Posterior vena cava (tissue), 2 donors: ENCODE measurements at regions of chr3 and their contacts with region 1.

Region 1: DNA sequence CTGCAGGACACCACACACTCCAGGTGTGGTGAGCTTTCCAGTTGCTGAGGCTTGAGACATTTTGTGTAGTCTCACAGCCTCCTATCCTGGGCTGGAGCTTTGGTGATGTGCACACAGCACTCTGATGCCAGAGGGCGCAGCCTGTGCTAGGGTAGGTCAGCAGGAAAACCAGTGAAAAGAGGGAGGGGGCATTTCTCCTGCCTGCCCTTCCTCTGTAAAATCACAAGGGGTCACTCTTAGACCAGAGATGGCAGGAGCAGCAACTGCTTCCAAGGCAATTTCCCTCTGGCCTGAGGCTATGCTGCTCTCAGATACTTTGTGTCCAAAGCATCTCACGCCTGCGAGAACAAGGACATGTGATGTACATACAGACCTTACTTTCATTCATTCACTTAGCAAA is 16.5 kb upstream of the MUSTN1 start:
- DNase-seq: no peak

Region 2: DNA sequence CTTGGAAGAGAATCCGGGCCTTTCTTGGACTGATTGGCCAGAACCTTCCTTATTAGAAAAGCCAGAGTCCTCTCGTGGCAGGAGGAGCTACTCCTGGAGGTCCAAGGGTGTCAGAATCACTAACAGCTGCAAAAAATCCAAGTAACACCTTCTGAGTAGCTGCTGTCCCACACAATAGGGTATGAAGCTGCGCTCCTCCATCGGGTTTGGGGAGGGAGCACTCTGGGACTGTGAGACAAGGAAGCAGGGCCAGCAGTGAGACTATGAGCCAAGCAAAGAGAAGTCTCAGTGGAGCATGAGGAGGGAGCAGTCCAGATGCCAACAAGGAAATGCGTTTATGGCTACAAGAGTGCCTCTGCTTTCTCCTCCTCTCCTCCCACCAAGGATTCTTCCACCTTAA is 428.2 kb before region 1 on chr3:
- intact Hi-C with region 1: no loop called
- DNase-seq: peak; percentile 66

Region 3: DNA sequence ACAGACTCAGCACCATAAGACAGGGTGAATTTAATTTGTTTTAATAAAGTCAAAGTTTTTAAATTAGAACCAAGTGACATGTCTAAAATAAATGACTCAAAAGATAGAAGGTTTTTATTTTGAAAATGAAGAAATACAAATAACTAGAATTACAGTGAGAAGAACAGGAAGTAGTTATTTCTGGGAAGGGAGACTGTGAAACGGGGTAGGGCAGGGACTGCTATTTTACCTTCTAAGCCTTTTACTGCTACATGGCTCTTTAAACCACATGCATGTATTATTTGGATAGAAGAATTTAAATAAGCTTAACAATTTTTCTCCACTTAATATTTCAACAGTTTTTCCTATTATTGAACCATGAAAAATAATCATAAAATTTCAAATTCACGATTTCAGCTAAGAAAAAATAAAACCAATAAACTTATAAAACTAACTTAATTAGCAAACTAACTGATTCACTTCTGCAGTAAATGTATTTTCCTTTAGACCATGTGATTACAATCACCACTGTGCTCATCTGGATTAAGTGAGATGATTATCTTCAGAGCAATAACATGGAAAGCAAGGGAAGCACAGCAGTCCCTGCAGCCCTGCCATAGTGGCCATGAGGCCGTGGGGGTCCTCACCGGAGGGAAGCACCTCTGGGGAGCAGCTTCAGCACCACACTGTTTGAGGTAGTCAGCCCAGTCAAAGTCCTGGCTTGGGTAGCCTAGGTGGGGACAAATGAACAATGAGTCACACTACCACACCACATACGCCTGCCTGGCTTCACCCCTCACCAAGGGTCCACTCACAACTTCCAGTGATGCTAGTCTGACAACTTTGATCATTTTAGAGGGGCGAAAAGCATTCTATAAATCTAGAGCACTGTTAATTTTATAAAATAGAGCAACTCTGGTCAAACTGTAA is 74.3 kb after region 1 on chr3:
- intact Hi-C with region 1: loop called (anchors 10 kb)
- DNase-seq: no peak